H1 (cell line): ENCODE measurements at regions of chr1 and their contacts with region 1.

Region 1: GRCh38 chr1:63063367-63063766 is 259.0 kb upstream of the FOXD3 start:
- DNase-seq: peak in 1 of 2 experiments; percentile 80
- H3K4me3 ChIP-seq: no peak overlapping the region
- H3K27ac ChIP-seq: no peak overlapping the region
- H3K4me1 ChIP-seq: no peaks in the 10 kb centered on the region
- H3K27me3 ChIP-seq: no peaks in the 10 kb centered on the region
- CTCF ChIP-seq: peak; percentile 49 to 73 (median 69)
- EP300 ChIP-seq: no peak
- POLR2A ChIP-seq: no peak
- RAD21 ChIP-seq: peak; percentile 73 to 80

Region 2: DNA sequence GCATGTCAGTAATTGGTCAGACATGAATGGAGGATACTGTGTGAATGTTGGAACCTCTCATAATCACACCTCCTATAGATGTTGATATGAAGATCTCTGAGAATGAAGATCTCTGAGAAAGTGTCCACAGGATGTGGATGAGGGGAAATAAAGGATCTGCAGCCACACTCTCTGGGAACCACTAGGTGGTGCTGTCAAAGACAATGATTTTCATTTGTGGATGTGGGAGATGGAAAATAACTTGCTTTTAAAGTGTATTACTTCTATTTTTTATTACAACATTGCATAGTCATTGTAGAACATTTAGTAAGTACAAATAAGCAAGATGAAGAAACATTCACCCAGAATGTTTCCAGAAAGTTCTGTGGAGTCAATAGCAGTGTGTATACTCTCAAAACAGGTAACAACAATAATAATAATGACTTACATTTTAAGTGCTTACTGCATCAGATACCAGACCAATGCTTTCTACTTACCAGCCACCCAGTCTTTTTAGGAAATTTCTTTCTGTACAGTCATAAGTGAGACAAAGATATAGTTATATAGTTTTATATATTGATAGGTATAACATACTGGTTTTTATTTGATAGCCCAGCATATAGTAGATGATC is 151.2 kb before region 1 on chr1:
- CTCF ChIA-PET with region 1: no interaction called
- POLR2A ChIA-PET with region 1: no interaction called
- DNase-seq: no peak
- H3K4me3 ChIP-seq: no peak overlapping the region
- H3K27ac ChIP-seq: no peak overlapping the region
- H3K4me1 ChIP-seq: no peaks in the 10 kb centered on the region
- H3K27me3 ChIP-seq: no peaks in the 10 kb centered on the region
- CTCF ChIP-seq: peak in 2 of 3 experiments; percentile 42 to 80; a peak in 2 of 4 replicates
- EP300 ChIP-seq: no peak
- POLR2A ChIP-seq: no peak
- RAD21 ChIP-seq: peak in 1 of 2 experiments; percentile 50; a peak in 3 of 4 replicates

Region 3: GRCh38 chr1:63033211-63033610 is 30.2 kb before region 1 on chr1:
- CTCF ChIA-PET with region 1: interaction called, 13 read pairs
- POLR2A ChIA-PET with region 1: no interaction called
- DNase-seq: no peak
- H3K4me3 ChIP-seq: no peak overlapping the region
- H3K27ac ChIP-seq: no peak overlapping the region
- H3K4me1 ChIP-seq: no peaks in the 10 kb centered on the region
- H3K27me3 ChIP-seq: no peaks in the 10 kb centered on the region
- CTCF ChIP-seq: no peak
- EP300 ChIP-seq: no peak
- POLR2A ChIP-seq: no peak
- RAD21 ChIP-seq: no peak

Region 4: GRCh38 chr1:63051886-63052285 is 11.5 kb before region 1 on chr1:
- CTCF ChIA-PET with region 1: interaction called, 11 read pairs
- POLR2A ChIA-PET with region 1: interaction called, 3 read pairs
- DNase-seq: no peak
- H3K4me3 ChIP-seq: no peak overlapping the region
- H3K27ac ChIP-seq: no peak overlapping the region
- H3K4me1 ChIP-seq: peaks cover 0 to 3% (median under 1%) of the 10 kb centered on the region in 4 experiments; a peak in 2 of 7 replicates
- H3K27me3 ChIP-seq: no peaks in the 10 kb centered on the region
- CTCF ChIP-seq: no peak
- EP300 ChIP-seq: no peak
- POLR2A ChIP-seq: no peak
- RAD21 ChIP-seq: no peak